ENCODE measurements at regions of chrX and their contacts with region 1.

Region 1: DNA sequence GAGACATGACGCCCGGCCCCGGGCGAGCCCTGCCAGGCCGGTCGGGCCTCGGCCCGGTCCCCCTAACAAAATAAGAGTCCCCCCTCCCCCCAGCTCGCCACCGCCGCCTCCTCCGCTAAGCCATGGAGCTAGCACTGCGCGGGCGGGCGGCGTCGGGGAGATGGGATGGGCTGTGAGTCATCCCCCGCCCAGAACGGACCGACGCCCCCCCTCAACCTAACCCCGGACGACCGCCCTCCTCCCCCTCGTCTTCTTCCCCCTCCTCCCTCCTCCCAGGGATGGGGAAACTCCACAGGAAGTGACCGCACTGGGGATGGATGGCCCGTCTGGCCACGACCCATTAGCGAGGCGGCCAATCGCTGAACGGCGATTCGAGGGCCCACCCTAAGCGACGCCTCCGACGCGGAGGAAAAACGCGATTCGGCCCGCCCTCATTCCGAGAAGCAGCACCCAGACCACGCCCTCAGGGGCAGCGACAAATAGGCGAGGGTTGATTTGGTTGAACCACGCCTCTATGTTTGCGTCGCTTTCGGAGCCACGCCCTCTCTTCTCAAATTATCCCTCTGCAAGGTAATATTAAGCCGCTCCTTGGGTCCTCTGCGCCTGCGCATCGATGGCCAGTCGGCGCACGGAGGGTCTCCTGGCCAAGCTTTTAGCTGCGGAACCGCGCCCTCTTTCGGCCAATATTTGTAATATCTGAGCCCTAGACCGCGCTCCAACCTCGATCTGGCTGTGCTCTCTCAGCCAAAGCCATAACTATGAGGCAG is at the start of gene TFE3:
- DNase-seq: peak; percentile 98
- H3K4me3 Mint-ChIP-seq: peak within 1 kb of the TSS; percentile 93
- H3K27ac Mint-ChIP-seq: peak within 1 kb of the TSS; percentile 94
- H3K4me1 Mint-ChIP-seq: peaks cover 28% of the 10 kb centered on the region
- H3K27me3 Mint-ChIP-seq: no peaks in the 10 kb centered on the region
- total RNA-seq, gene TFE3: 34.7 to 35.5 TPM

Region 2: GRCh38 chrX:48631350-48632090 is 411.9 kb before region 1 on chrX:
- CTCF ChIA-PET with region 1: no interaction called
- intact Hi-C with region 1: loop called (anchors 1 kb)
- DNase-seq: peak; percentile 86
- H3K4me3 Mint-ChIP-seq: no peak overlapping the region
- H3K27ac Mint-ChIP-seq: peak overlapping the region; percentile 36
- H3K4me1 Mint-ChIP-seq: peaks cover 10% of the 10 kb centered on the region
- H3K27me3 Mint-ChIP-seq: no peaks in the 10 kb centered on the region

Region 3: DNA sequence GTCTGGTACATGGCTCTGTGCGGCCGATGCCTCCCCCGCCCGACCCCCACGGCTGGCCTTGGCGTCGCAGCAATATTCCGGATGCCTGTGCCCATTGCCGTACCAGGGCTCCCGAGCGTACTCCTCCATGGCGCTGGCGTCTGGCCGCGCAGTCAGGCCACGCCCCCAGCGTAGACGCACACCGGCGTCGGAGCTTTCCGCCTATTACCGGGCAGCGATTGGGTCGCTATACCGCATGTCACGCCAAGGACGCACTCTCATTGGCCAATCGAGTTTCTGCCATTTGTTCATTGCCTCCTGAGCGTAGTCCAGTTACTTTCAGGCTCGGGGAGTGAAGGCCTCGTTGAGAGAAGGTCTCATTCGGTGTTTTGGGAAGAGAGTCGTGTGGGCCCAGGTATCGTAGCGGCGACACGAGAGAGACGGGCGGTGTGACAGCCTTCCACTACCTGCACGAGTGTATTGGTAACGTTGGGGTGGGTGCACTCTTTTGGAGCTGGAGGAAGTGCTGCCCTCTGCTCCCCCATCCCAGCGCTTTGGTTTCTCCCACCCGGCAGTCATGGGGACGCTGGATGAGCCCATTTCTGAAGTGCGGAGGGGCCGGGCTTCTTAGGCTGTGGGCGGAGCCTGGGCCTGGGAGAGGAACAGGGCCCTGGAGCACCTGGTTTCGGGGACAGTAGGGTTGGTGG is 145.6 kb before region 1 on chrX and contains the starts of genes PQBP1 and TIMM17B:
- CTCF ChIA-PET with region 1: no interaction called
- intact Hi-C with region 1: loop called (anchors 2 kb)
- DNase-seq: peak; percentile 91
- H3K4me3 Mint-ChIP-seq: peak within 1 kb of the TSS; percentile 81
- H3K27ac Mint-ChIP-seq: peak within 1 kb of the TSS; percentile 94
- H3K4me1 Mint-ChIP-seq: peaks cover 22% of the 10 kb centered on the region
- H3K27me3 Mint-ChIP-seq: no peaks in the 10 kb centered on the region
- total RNA-seq, gene PQBP1: 86.8 to 94.5 TPM
- total RNA-seq, gene TIMM17B: 88.0 to 94.9 TPM

Region 4: DNA sequence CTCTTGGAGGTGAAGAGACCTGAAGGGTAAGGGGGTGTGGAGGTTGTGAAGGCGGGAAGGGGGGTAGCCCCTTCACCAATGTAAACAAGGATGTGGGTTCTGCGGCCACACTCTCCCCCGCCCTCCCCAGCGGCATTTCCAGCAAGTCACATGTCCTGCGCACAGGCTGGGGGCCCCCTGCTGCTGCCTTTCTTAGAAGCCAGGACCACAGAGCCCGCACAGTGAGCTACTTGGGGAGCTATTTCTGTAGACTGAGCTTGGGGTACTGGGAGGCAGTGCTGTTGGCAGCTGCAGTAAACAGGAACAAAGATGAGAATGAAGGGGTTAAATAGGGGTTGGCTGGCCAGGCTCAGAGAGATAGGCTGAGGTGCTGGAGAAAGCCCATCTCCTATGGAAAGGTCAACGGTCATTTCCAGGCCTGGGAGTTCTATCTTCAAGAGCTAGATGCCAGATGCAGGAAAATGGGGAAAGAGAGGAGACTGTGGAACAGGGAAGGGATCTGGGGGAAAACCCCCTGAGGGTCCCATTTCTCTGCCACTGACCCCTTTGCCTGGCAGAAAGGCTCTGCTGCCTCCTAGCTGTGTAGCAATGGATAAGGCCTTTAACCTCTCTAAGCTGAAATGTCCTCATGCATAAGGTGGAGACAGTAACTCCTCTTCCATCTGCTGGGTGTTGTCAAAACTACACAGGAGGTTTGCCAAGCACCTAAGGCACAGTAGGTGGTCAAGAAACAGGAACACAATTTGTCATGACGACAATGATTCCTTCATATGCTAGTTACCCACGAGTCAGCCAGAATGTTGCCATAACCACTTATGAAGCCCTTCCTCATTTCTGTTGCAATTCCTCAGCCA is 106.1 kb before region 1 on chrX:
- CTCF ChIA-PET with region 1: interaction called, 6 read pairs
- intact Hi-C with region 1: loop called (anchors 1 kb)
- DNase-seq: peak; percentile 95
- H3K4me3 Mint-ChIP-seq: peak overlapping the region; percentile 75
- H3K27ac Mint-ChIP-seq: peak overlapping the region; percentile 100
- H3K4me1 Mint-ChIP-seq: peaks cover 81% of the 10 kb centered on the region
- H3K27me3 Mint-ChIP-seq: no peaks in the 10 kb centered on the region

Region 5: DNA sequence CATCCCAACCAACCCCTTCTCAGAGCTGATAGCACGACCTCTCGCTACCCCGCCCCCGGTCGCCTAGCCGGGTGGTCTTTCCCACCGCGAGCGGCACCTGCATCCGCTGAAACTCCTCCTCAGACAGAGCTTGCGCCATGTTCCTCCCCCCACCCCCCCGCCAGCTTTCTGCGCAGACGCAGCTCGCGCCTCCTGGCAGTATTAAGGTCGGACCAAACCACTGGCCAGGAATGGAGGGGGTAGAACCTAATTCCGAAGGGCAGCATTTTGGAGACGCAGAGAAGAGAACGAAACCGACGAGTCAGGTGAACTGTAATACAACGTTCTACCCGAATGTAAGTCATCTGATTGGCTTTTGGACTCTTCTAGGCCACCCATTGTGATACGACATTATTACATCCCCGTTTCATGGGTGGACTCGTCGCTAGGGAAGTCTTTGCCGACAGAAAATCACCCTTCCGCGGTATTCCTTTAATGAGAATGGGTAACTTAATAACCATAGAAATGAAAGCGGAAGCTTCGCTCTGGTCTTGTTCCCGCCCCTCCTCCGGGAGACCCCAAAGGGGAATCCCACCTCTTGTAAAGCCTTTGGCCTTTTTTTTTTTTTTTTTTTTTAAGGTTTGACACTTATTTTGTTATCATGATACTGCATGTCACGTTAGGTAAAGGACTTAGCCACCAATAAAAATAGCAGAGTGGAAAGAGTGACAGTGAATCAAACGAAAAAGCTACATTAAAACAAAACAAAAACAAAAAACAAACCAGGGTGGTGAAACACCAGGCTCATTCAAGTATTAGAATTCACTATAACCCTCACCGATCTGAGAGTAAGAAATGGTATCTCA is 41.1 kb before region 1 on chrX and contains the start of gene GRIPAP1:
- CTCF ChIA-PET with region 1: no interaction called
- intact Hi-C with region 1: loop called (anchors 1 kb)
- DNase-seq: peak; percentile 85
- H3K4me3 Mint-ChIP-seq: peak within 1 kb of the TSS; percentile 99
- H3K27ac Mint-ChIP-seq: peak within 1 kb of the TSS; percentile 97
- H3K4me1 Mint-ChIP-seq: peaks cover 37% of the 10 kb centered on the region
- H3K27me3 Mint-ChIP-seq: no peaks in the 10 kb centered on the region
- total RNA-seq, gene GRIPAP1: 64.8 to 73.1 TPM

Region 6: GRCh38 chrX:49120099-49120498 is 76.7 kb after region 1 on chrX:
- CTCF ChIA-PET with region 1: no interaction called
- intact Hi-C with region 1: loop called (anchors 1 kb)
- DNase-seq: no peak
- H3K4me3 Mint-ChIP-seq: no peak overlapping the region
- H3K27ac Mint-ChIP-seq: no peak overlapping the region
- H3K4me1 Mint-ChIP-seq: peaks cover 35% of the 10 kb centered on the region
- H3K27me3 Mint-ChIP-seq: no peaks in the 10 kb centered on the region

Region 7: DNA sequence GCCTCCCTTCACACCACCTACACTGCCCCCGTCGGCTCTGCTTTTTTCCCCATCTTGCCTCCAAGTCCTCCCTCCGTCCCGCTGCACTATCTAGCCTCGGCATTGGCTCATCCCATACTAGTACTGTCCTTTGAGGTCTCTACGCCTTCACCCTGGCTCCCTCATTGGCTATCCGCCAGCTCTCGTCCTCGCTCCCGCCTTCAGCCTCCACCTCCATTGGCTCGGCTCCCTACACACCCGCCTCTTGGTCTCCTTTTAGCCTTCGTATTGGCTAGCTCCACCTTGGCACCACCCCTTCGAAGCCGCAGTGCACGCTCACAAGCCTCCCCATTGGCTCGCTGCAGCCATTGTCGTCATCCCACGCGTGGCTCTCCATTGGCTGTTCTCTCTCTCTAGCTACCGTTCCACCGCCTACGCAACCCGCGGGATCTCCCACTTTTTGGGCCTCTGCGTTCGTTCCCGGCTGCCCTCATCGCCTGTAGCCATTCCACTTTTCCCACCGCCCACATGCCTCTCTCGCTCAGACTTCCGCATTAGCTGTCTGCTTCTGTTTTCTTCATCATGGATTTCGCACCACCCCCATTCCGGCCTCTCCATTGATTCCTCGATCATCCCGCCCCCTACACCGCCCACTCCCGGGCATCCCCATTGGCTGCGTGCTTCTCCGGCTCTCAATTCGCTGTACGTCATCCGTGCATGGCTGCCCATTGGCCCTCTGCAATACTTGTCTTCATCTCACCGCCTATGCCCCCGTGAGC is 225.8 kb after region 1 on chrX:
- CTCF ChIA-PET with region 1: no interaction called
- intact Hi-C with region 1: loop called (anchors 1 kb)
- DNase-seq: peak; percentile 97
- H3K4me3 Mint-ChIP-seq: peak overlapping the region; percentile 85
- H3K27ac Mint-ChIP-seq: peak overlapping the region; percentile 98
- H3K4me1 Mint-ChIP-seq: peaks cover 48% of the 10 kb centered on the region
- H3K27me3 Mint-ChIP-seq: no peaks in the 10 kb centered on the region

Region 8: DNA sequence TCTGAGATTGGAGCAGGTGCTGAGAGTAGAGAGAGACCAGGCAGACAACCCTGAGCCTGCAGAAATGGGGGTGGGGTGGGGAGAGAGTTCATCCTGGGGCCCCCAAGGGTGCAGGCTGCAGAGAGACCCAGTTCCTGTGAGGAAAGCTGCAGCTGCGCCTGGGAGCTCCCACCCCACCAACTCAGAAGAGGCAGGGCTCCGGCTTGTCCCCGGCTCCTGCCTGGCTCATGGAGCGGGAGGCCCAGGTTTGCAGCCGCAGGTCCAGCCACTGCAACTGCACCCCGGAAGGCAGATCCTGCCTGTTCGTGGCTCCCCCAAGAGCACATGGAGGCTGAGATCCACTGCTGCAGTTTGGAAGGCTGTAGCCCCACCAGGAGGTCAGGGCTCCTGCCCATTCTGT is 1471.4 kb after region 1 on chrX:
- CTCF ChIA-PET with region 1: no interaction called
- intact Hi-C with region 1: no loop called
- DNase-seq: no peak
- H3K4me3 Mint-ChIP-seq: no peak overlapping the region
- H3K27ac Mint-ChIP-seq: no peak overlapping the region
- H3K4me1 Mint-ChIP-seq: no peaks in the 10 kb centered on the region
- H3K27me3 Mint-ChIP-seq: peaks cover 3% of the 10 kb centered on the region

Measured in activated naive CD4-positive, alpha-beta T cell treated with anti-CD3 and anti-CD28 coated beads for 36 hours (primary cell).